ENCODE measurements at regions of chr1 and their contacts with region 1.

Region 1: GRCh38 chr1:220908757-220909156 is 29.5 kb downstream of the HLX start:
- DNase-seq: no peak
- ATAC-seq: peak in 1 of 4 donors; percentile 45
- H3K4me3 ChIP-seq: no peak overlapping the region
- H3K27ac ChIP-seq: no peak overlapping the region
- H3K4me1 ChIP-seq: peaks cover 0 to 8% (median 0%) of the 10 kb centered on the region in 12 donors
- H3K27me3 ChIP-seq: no peaks in the 10 kb centered on the region
- CTCF ChIP-seq: peak; percentile 19 to 72 (median 61)
- POLR2A ChIP-seq: no peak

Region 2: DNA sequence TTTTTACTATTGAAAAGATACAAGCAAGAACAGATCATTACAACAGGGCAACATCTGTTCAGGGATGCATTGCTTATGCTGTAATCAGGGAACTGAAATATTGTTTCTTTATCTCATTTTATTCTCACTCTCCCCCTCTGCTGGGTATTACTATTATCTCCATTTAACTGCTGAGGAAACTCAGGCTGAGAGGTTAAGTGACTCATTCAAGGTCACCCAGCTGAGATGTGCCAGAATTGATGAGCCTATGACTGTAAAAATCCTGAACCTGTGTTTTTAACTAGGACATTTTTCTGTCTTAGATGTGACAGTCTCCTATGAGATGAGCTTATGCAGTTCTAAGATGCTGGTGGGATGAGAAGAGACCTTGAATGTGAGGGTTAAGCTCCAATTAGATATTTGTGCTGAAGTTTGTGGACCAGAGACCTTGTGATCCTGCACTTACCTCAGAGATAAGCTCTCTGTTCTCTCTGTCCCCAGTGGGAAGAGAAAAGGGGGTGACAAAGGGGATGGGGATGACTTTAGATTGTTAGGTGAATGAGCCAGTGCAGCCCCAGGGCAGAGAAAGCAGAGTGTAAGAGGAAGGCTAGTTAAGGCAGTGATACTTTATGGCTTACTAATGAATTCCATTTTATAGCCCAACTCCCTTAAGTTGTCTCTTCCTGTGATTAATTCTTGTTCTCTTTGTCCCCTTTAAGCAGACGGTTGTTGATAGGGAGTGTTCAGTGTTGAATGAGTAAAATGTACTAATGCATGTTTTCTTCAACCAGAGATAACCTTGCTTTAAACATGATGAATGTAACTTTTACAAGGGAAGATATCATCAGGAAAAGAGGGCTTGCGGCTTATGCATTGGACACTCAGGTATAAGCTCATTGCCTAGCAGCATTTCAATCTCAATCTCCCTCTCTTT is 81.9 kb after region 1 on chr1:
- intact Hi-C with region 1: loop called in 1 of 10 experiments (anchors 10 kb)
- DNase-seq: no peak
- ATAC-seq: peak in 2 of 4 donors; percentile 45 to 53
- H3K4me3 ChIP-seq: no peak overlapping the region
- H3K27ac ChIP-seq: no peak overlapping the region
- H3K4me1 ChIP-seq: peaks cover 0 to 16% (median 0%) of the 10 kb centered on the region in 12 donors
- H3K27me3 ChIP-seq: no peaks in the 10 kb centered on the region
- CTCF ChIP-seq: no peak
- POLR2A ChIP-seq: no peak

Region 3: DNA sequence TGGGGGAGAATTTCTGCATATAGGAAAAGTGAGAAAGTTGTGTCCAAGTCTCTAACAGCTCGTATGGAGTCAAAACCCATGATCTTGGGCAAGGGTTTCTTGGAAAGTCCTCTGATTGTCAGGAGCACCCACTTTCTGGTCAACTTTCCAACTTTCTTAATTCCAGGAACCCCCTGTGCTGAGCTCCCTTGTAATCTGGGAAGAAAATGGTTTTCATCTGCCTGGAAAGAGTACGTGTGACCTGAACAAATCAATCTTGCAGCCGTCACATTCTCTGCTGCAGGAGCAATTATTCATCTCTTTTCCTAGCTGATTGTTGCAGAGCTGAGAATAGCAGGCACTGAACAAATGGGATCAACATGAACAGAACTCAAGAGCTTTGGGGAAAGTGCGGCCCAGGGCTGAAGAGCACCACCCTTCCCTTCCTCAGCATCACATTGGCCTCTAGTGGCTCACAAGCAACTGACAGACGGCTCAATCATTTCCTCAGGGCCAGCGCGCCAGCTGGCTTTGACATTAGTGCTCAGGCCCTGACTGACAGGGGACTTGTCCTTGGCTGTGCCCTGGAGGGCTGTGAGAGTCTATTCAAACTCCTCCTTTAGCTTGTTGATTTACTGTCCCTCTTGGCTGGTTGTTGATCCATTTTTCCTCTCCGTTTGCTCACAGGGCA is 265.7 kb after region 1 on chr1:
- intact Hi-C with region 1: loop called in 4 of 10 experiments (anchors 1 to 10 kb)
- DNase-seq: peak; percentile 76 to 87 (median 77)
- ATAC-seq: peak; percentile 99 to 100 (median 99)
- H3K4me3 ChIP-seq: no peak overlapping the region
- H3K27ac ChIP-seq: peak overlapping the region in 2 of 12 donors; percentile 37 to 50
- H3K4me1 ChIP-seq: peaks cover 0 to 15% (median 10%) of the 10 kb centered on the region in 12 donors
- H3K27me3 ChIP-seq: no peaks in the 10 kb centered on the region
- CTCF ChIP-seq: peak; percentile 27 to 67 (median 50)
- POLR2A ChIP-seq: no peak

Region 4: DNA sequence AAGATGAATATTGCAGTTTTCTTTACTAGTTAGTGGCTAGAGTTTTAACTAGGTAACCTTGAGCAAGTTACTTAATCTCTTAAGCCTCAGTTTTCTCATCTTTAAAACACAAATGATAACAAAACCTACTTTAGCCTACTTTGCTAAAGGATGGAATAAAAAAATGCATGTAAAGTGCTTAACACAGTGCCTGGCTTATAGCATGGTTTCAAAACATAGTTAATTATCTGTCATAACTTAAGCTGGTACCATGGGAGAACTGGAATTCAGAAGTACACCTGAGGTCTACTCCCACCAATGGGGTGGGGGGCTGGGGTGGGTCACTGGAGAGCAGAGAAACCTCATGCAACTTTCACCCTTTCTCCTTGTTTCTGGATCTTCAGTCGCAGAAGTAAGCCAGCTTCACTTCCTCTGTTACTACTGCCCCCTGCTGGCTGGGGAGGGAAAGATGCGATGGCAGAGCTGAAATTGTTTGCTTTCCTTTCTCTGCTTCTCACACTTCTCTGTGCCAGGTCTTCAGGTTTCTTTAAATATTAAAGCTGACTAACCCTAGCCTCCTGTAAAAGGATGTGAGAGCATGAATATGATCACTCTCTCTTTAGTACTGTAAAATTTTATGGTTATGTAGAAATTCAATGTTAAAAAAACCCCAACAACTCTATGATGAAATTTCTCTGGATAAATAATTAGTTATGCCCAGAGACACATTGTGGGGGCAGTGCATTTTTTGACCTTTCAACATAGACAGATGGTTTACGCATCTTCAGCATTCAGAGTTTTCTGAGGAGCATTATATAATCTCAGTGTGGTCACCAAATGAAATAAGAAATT is 294.7 kb after region 1 on chr1:
- intact Hi-C with region 1: loop called in 8 of 10 experiments (anchors 2 to 10 kb)
- DNase-seq: peak; percentile 76 to 86 (median 80)
- ATAC-seq: peak; percentile 44 to 76 (median 71)
- H3K4me3 ChIP-seq: peak overlapping the region in 1 of 12 donors; percentile 1
- H3K27ac ChIP-seq: peak overlapping the region; percentile 2 to 68 (median 39)
- H3K4me1 ChIP-seq: peaks cover 0 to 27% (median 18%) of the 10 kb centered on the region in 12 donors
- H3K27me3 ChIP-seq: no peaks in the 10 kb centered on the region
- CTCF ChIP-seq: peak; percentile 80 to 96 (median 91)
- POLR2A ChIP-seq: no peak

Region 5: DNA sequence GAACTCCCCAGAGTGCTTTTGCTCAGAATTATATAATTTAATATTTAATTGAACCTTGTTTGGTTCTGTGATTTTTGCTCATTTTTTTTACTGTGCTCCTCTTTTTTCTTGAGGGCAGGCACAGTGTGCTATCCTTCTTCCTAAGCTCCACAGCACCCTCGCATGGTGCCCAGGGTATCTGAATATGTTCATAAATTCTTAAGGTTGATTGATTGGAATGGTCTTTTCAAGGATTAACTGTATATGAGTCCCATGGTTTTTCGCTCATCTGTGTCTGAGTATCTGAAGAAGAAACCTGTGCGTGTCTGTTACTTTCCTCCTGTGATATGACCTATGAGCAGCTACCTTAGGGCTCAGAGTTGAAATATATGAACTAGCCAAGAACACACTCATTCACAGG is 364.2 kb after region 1 on chr1:
- intact Hi-C with region 1: loop called in 4 of 10 experiments (anchors 10 kb)
- DNase-seq: no peak
- ATAC-seq: no peak
- H3K4me3 ChIP-seq: no peak overlapping the region
- H3K27ac ChIP-seq: no peak overlapping the region
- H3K4me1 ChIP-seq: no peaks in the 10 kb centered on the region
- H3K27me3 ChIP-seq: no peaks in the 10 kb centered on the region
- CTCF ChIP-seq: peak in 7 of 12 donors; percentile 18 to 41 (median 34)
- POLR2A ChIP-seq: no peak